ENCODE measurements at regions of chr4 and their contacts with region 1.

Region 1: DNA sequence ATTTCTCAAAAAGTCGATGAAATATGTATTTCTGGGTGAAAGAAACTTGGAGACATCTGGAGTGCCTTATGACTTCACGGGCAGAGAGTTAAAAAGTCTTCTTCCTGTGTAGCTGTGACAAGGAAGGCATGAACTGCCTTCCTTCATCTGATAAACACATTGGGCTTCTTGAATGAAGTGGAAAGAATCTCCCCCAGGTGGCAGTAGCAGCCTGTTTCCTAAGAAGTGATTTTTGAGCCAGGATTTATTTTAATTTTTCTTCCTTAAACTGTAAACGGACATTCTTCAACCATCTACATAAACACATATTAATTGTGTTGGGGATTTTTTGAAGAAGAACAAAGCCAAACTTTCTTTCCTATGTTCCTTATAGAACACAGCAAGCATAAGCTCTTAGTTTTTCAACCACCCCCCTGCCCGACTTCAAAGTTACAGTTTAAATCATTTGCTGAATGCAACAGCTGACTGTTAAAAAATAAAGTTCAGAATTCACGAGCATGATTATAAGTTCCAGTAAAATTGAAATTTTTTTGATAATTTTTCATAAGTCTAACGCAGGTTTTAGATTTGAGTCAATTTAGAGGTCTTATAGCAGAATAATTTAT is 980 bp upstream of the GIMD1 start:
- DNase-seq: peak in 1 of 2 experiments; percentile 17
- H3K4me3 ChIP-seq: no peak overlapping the region
- H3K27ac ChIP-seq: no peak overlapping the region
- H3K4me1 ChIP-seq: no peaks in the 10 kb centered on the region
- H3K27me3 ChIP-seq: no peaks in the 10 kb centered on the region
- CTCF ChIP-seq: peak in 2 of 3 experiments; percentile 60 to 72; a peak in 3 of 4 replicates
- EP300 ChIP-seq: no peak
- POLR2A ChIP-seq: no peak
- RAD21 ChIP-seq: peak; percentile 84 to 88

Region 2: GRCh38 chr4:106358899-106359298 is 10.7 kb before region 1 on chr4:
- CTCF ChIA-PET with region 1: interaction called, 12 read pairs
- POLR2A ChIA-PET with region 1: no interaction called
- DNase-seq: no peak
- H3K4me3 ChIP-seq: no peak overlapping the region
- H3K27ac ChIP-seq: no peak overlapping the region
- H3K4me1 ChIP-seq: no peaks in the 10 kb centered on the region
- H3K27me3 ChIP-seq: no peaks in the 10 kb centered on the region
- CTCF ChIP-seq: no peak
- EP300 ChIP-seq: no peak
- POLR2A ChIP-seq: no peak
- RAD21 ChIP-seq: no peak

Region 3: GRCh38 chr4:106380179-106380578 is 10.6 kb after region 1 on chr4:
- CTCF ChIA-PET with region 1: interaction called, 17 read pairs
- POLR2A ChIA-PET with region 1: no interaction called
- DNase-seq: no peak
- H3K4me3 ChIP-seq: no peak overlapping the region
- H3K27ac ChIP-seq: no peak overlapping the region
- H3K4me1 ChIP-seq: no peaks in the 10 kb centered on the region
- H3K27me3 ChIP-seq: no peaks in the 10 kb centered on the region
- CTCF ChIP-seq: no peak
- EP300 ChIP-seq: no peak
- POLR2A ChIP-seq: no peak
- RAD21 ChIP-seq: no peak

Region 4: DNA sequence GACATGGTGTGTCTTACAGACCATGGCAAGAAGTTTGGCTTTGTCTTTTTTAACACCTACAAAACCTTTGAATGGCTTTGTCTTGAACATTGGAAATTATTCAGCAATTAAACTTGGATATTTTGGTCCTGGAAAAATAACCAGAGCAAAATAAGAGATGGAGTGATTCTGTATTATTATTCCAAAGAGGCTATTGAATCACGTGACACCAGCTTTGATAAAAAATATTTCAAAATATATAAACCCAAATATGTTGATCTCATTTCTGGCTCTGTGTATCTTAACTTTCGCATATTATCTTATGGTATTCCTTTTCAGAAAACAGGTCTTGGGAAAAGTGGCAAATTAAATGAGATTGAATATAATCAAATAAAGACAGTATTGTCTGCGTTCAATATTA is 31.6 kb after region 1 on chr4:
- CTCF ChIA-PET with region 1: no interaction called
- POLR2A ChIA-PET with region 1: no interaction called
- DNase-seq: no peak
- H3K4me3 ChIP-seq: no peak overlapping the region
- H3K27ac ChIP-seq: no peak overlapping the region
- H3K4me1 ChIP-seq: no peaks in the 10 kb centered on the region
- H3K27me3 ChIP-seq: no peaks in the 10 kb centered on the region
- CTCF ChIP-seq: no peak
- EP300 ChIP-seq: no peak
- POLR2A ChIP-seq: no peak
- RAD21 ChIP-seq: no peak

Region 5: DNA sequence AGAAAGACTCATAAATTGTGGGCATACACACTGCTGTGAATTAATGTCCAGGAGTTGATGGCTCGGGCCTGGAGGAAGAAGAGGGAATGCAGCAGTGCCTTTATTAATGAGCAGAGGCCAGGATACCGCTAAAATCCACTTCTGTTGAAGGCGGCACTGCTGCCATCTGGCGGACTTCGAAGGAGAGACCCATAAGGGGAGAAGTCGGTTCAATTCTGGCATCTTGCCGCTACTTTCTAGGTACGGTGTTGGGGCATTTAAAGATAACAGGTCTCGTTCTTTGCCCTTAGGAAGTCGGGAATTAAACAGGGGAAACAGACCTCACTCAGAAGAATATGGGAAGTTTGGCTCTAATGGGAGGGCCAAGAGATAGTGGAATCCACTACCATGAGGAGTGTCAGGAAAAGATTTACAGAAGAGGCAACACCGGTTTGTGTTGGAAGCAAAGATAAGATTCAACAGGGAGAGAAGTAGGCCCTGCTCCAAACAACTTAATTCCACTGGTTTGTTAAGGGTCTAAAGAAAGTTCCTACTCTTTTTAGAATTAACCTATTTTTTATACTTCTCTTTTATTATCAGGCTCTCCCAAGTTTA is 132.6 kb after region 1 on chr4:
- CTCF ChIA-PET with region 1: interaction called, 36 read pairs
- POLR2A ChIA-PET with region 1: no interaction called
- DNase-seq: peak; percentile 44 to 80
- H3K4me3 ChIP-seq: no peak overlapping the region
- H3K27ac ChIP-seq: no peak overlapping the region
- H3K4me1 ChIP-seq: no peaks in the 10 kb centered on the region
- H3K27me3 ChIP-seq: no peaks in the 10 kb centered on the region
- CTCF ChIP-seq: peak; percentile 66 to 89 (median 81)
- EP300 ChIP-seq: no peak
- POLR2A ChIP-seq: no peak
- RAD21 ChIP-seq: peak; percentile 87 to 96

Region 6: DNA sequence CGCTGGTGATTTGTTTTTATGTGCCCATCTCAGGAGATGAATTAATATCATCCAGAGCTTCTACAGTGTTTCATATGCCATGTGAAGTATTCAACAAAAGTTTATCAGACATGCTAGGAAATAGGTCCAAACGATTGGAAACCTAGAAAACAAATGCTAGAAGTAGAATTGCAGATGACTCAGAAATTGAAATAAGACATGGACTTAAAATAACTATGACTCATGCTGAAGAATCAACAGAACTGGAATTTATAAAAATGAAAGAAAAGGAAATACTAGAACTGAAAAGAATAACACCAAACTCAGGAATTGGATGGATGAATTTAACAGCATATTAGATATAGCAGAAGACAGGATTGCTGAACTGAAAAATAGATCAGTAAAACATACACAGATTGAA is 171.7 kb after region 1 on chr4:
- CTCF ChIA-PET with region 1: no interaction called
- POLR2A ChIA-PET with region 1: no interaction called
- DNase-seq: no peak
- H3K4me3 ChIP-seq: no peak overlapping the region
- H3K27ac ChIP-seq: no peak overlapping the region
- H3K4me1 ChIP-seq: no peaks in the 10 kb centered on the region
- H3K27me3 ChIP-seq: no peaks in the 10 kb centered on the region
- CTCF ChIP-seq: no peak
- EP300 ChIP-seq: no peak
- POLR2A ChIP-seq: no peak
- RAD21 ChIP-seq: no peak

Region 7: DNA sequence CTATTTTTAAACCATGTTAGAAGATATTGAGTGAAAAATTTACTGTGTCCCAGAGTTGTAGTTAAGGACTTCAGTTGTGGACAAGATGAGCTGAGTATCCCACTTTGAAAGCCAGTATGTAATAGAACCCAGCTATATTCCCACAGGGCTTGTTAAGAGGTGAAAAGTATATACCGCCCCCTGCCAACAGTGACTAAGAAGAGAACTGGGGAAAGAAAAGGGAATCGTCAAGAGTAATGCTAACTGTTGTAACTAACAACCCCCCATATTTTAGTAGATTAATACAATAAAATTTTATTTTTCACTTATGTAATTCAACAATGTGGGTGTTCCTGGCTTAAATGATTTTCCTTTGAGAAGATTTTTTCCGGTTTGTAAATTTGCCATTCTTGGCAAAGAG is 249.4 kb after region 1 on chr4:
- CTCF ChIA-PET with region 1: interaction called, 14 read pairs
- POLR2A ChIA-PET with region 1: no interaction called
- DNase-seq: no peak
- H3K4me3 ChIP-seq: no peak overlapping the region
- H3K27ac ChIP-seq: no peak overlapping the region
- H3K4me1 ChIP-seq: no peaks in the 10 kb centered on the region
- H3K27me3 ChIP-seq: no peaks in the 10 kb centered on the region
- CTCF ChIP-seq: peak in 2 of 3 experiments; percentile 32 to 36; a peak in 2 of 4 replicates
- EP300 ChIP-seq: no peak
- POLR2A ChIP-seq: no peak
- RAD21 ChIP-seq: peak; percentile 60 to 62

Region 8: DNA sequence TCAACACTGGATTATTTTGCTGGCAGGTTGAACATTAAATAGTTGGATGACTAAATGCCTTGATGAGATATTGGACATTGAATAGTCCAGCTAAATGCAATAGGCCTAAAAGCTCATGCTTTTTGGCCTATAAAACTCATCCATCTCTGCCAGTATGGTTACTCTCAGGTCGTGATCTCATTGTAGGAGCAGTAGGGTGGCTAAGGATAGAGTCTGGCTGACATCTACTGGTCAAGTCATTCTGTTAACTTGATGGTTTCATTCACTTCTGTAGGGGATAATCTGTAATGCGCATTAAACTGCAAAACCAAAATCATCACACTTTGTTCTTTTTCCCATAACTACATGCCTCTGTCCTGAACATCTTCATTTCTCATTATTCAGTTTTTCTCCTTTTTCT is 439.5 kb after region 1 on chr4:
- CTCF ChIA-PET with region 1: interaction called, 10 read pairs
- POLR2A ChIA-PET with region 1: no interaction called
- DNase-seq: no peak
- H3K4me3 ChIP-seq: no peak overlapping the region
- H3K27ac ChIP-seq: no peak overlapping the region
- H3K4me1 ChIP-seq: no peaks in the 10 kb centered on the region
- H3K27me3 ChIP-seq: no peaks in the 10 kb centered on the region
- CTCF ChIP-seq: peak in 2 of 3 experiments; percentile 54 to 55; a peak in 3 of 4 replicates
- EP300 ChIP-seq: no peak
- POLR2A ChIP-seq: no peak
- RAD21 ChIP-seq: peak; percentile 80 to 85